ENCODE measurements at regions of chr13 and their contacts with region 1.

Region 1: DNA sequence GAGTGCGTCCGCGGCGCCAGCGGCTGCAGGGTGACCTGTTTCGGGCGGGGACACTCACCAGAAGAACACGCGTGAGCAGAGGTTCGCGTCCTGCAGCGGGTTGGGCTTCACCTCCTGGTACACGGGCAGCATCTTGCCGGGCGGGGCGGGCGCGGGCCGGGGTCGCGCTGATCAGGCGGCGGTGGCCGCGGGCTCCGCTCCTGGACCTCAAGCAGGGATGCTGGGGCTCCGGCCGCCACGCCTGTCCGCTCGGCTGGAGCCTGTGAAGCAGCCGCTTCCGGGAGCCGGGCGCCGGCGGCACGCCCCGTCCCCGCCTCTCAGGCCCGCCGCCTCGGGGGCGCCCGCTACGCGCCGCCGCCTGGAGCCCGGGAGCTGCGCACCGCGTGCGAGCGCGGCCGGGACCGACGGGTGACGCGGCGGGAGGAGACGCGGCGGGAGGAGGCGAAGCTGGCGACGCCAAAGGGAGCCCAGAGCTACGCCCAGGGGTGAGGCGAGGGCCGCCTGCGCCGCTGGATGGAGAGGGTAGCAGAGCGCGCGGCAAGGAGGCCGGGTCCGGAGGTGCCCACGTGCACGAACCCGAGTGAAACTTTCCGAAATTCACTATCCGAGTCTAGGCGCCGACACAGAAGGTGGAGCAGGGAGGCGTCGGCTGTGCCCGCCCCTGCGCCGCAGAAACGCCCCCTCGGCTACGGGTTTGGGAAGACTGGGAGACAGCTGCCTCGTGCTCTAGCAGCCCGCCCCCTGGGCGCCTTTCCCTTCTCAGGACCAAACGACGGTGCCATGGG is at the start of gene ABCC4:
- DNase-seq: peak; percentile 61
- ATAC-seq: peak; percentile 82
- H3K4me3 Mint-ChIP-seq: peak within 1 kb of the TSS; percentile 83
- H3K27ac Mint-ChIP-seq: peak within 1 kb of the TSS; percentile 38
- H3K4me1 Mint-ChIP-seq: peaks cover 26% of the 10 kb centered on the region
- H3K27me3 Mint-ChIP-seq: no peaks in the 10 kb centered on the region
- CTCF ChIP-seq: no peak
- total RNA-seq, gene ABCC4: 10.8 and 11.7 TPM in 2 replicates

Region 2: DNA sequence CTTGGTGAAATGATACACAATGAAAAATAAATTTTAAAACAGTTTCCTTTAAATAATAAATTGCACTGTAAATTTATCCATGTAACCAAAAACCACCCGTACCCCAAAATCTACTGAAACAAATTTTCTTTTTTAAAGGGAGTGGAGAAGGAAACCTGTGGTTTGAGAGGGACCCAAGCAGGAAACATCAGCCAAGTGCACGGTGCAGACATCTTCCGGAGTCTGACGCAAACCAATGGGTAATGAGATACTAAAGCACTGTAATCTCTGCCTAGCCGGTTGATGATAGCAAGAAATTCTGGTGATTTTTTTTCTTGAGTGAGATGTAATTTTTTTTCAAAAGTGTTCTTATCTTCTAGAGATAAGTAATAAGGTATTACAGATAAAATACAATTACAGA is 115.5 kb before region 1 on chr13:
- CTCF ChIA-PET with region 1: interaction called, 10 read pairs
- POLR2A ChIA-PET with region 1: no interaction called
- intact Hi-C with region 1: loop called (anchors 1 kb)
- DNase-seq: no peak
- ATAC-seq: peak; percentile 61
- H3K4me3 Mint-ChIP-seq: peak overlapping the region; percentile 20
- H3K27ac Mint-ChIP-seq: no peak overlapping the region
- H3K4me1 Mint-ChIP-seq: peaks cover 17% of the 10 kb centered on the region
- H3K27me3 Mint-ChIP-seq: no peaks in the 10 kb centered on the region
- CTCF ChIP-seq: no peak

Region 3: GRCh38 chr13:95191821-95192563 is 109.4 kb before region 1 on chr13:
- CTCF ChIA-PET with region 1: interaction called, 13 read pairs
- POLR2A ChIA-PET with region 1: no interaction called
- intact Hi-C with region 1: loop called (anchors 1 kb)
- DNase-seq: peak; percentile 67
- ATAC-seq: peak; percentile 97
- H3K4me3 Mint-ChIP-seq: no peak overlapping the region
- H3K27ac Mint-ChIP-seq: no peak overlapping the region
- H3K4me1 Mint-ChIP-seq: peaks cover 1% of the 10 kb centered on the region
- H3K27me3 Mint-ChIP-seq: no peaks in the 10 kb centered on the region
- CTCF ChIP-seq: no peak

Region 4: DNA sequence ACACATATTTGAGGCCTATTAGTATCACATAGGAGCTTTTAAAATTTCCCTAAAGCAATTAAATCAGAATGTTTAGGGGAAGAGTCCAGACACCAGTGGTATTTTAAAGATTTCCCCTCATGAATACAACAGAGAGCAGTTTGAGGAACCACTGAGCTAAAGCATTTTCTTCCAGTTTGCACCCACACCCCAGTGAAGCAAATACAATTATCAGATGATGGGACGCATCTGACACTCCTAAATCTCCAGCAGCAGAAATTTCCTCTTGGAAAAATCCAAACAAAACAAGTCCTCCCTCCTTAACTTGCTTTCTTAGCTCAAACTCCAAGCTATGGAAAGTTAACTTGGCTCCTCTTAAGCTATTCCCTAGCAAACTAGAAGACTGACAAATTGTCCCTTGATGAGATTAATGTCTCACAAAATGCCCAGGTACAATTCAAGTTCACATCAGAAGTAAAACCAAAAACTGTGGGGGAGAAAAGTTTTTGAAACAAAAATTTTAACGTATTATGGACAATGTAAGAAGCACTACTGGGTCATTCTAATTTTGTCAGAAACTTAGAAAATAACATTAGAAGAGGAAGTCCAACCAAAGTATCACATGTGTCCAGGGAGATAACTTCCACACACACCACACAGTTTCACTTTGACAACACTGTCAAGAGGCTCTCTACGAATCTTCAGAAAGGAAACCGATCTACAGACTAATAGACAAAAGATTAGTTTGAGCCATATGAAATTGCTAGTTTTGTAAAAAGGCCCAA is 74.3 kb before region 1 on chr13:
- CTCF ChIA-PET with region 1: interaction called, 3 read pairs
- POLR2A ChIA-PET with region 1: no interaction called
- intact Hi-C with region 1: loop called (anchors 1 kb)
- DNase-seq: no peak
- ATAC-seq: peak; percentile 78
- H3K4me3 Mint-ChIP-seq: peak overlapping the region; percentile 50
- H3K27ac Mint-ChIP-seq: peak overlapping the region; percentile 65
- H3K4me1 Mint-ChIP-seq: peaks cover 23% of the 10 kb centered on the region
- H3K27me3 Mint-ChIP-seq: no peaks in the 10 kb centered on the region
- CTCF ChIP-seq: no peak

Region 5: DNA sequence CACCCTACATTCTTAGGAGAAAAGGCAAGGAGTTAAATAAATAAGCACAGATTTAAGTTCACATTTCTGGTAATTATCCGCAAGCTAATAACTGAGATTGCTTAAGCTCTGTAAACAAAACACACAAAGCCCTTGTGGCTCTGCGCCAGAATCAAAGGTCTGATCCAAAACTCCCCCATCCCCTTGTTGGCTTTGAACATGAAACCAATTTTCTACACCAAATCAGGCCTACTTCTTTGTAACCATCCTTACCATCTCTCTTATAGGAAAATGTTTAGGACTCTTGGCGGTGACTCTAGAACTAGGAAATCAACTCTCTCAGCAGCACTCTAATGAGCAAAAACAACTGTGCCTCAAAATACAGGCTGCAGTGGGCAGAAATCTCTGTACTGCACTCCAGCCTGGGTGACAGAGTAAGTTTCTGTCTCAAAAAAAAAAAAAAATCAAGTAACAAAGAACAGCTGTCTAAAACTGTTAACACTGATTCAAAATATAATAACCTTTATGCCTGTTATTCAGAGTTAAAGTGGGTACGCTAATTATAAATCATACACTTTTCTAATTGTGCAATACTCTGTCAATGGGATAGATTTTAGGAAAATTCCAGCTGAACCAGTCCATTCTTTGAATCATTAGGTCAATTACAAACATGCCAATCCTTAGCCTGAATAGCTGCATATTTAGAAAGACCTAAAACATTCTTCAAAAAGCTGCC is 25.9 kb before region 1 on chr13:
- CTCF ChIA-PET with region 1: no interaction called
- POLR2A ChIA-PET with region 1: no interaction called
- intact Hi-C with region 1: loop called (anchors 2 kb)
- DNase-seq: no peak
- ATAC-seq: no peak
- H3K4me3 Mint-ChIP-seq: no peak overlapping the region
- H3K27ac Mint-ChIP-seq: no peak overlapping the region
- H3K4me1 Mint-ChIP-seq: peaks cover 19% of the 10 kb centered on the region
- H3K27me3 Mint-ChIP-seq: no peaks in the 10 kb centered on the region
- CTCF ChIP-seq: no peak

Region 6: DNA sequence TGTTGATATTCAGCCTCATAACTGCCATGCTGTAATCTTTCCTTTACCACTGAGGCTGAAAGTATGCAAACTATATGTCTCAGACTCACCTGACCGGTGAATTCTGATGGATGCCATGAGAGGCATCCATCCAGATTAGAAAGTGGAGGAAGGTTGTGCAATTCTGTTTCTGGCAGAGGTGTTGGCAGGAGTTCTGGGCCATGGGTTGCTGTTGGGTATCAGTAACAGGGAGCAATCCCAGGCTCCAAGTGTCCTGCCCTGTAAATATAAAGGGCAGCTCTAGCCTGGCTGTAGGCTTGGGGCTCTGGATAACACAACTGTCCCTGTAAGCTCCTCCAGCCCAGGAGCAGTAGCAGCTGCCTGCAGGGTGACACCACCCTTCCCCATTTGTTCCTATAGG is 77.2 kb after region 1 on chr13:
- CTCF ChIA-PET with region 1: interaction called, 17 read pairs
- POLR2A ChIA-PET with region 1: no interaction called
- intact Hi-C with region 1: loop called (anchors 1 kb)
- DNase-seq: no peak
- ATAC-seq: no peak
- H3K4me3 Mint-ChIP-seq: no peak overlapping the region
- H3K27ac Mint-ChIP-seq: no peak overlapping the region
- H3K4me1 Mint-ChIP-seq: peaks cover 5% of the 10 kb centered on the region
- H3K27me3 Mint-ChIP-seq: peaks cover 32% of the 10 kb centered on the region
- CTCF ChIP-seq: no peak